K562 (cell line): ENCODE measurements at regions of chr3 and their contacts with region 1.

Region 1: DNA sequence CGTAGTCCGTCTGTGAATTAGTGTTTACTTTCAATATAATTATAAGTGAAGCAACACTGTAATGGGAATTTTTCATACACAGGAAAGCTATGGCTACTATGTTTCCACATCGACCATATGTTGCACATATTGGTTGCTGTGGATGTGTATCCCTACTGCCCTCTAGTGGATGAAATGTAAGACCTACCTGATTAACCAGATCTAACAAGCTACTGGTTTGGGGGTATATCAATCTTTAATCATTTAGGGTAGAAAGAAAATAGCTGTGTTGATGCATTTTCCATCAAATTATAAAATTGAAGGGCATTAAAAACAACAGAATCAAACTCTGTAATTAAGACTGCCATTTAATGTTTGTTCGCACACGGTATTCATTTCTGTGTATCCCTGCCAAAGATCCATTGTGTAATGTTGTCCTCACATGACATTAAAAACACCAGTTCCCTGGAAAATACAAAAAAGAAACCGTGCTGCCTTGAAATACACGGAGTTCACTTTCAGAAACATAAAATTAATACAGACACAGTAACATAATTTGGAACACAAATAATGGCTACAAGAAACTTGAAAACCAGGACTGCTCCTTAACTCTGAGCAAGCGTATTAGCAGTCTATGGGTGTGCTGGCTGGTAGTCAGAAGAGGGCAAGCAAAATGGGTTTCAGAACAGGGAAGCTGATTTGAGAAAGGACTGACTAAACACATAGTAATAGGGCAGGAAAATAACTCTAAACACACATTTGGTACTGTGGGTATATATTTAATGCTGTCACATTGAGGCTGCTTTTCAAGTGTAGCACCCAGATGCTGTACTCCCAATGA is 125.1 kb downstream of the TIGIT start:
- DNase-seq: peak; percentile 20 to 43 (median 36)
- ATAC-seq: peak; percentile 83
- H3K4me3 ChIP-seq: no peak overlapping the region
- H3K27ac ChIP-seq: no peak overlapping the region
- H3K4me1 ChIP-seq: no peaks in the 10 kb centered on the region
- H3K27me3 ChIP-seq: no peaks in the 10 kb centered on the region
- CTCF ChIP-seq: peak; percentile 34 to 65 (median 56)
- EP300 ChIP-seq: no peak
- POLR2A ChIP-seq: no peak
- RAD21 ChIP-seq: peak in 1 of 2 experiments; percentile 53; a peak in 3 of 4 replicates

Region 2: DNA sequence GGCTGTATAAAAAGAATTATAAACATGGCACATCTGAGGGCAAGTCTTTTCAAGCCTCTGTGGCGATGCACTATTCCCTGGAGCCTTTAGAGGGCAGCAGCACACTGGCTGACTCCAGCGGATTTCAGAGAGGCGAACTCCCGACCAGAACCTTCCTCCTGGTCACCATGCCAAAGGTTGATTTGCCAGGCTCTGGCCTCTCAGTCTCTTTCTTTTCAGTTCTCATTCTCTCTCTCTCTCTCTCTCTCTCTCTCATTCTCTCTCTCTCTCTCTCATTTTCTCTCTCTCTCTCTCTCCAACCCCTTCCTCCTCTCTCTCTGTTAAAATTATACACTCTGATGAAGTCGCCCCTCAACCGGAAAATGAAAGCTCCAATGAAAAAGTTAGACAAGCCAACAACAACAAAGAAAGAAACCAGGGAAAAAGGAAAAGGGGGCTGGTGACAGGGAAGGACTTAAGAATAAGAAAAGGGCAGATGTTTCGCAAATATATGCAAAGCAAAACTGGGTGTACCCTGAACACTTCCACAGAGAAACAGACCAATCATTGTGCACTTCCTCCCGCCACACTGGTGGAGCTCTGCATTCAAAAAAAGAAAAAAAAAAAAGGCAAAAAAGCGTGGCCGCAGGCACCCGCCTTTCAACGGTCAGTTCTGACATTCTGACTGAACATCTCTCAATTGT is 34.9 kb before region 1 on chr3:
- CTCF ChIA-PET with region 1: no interaction called
- POLR2A ChIA-PET with region 1: no interaction called
- in situ Hi-C with region 1: no loop called
- intact Hi-C with region 1: loop called (anchors 2 kb)
- DNase-seq: peak; percentile 40 to 57 (median 44)
- ATAC-seq: peak; percentile 88
- H3K4me3 ChIP-seq: no peak overlapping the region
- H3K27ac ChIP-seq: no peak overlapping the region
- H3K4me1 ChIP-seq: no peaks in the 10 kb centered on the region
- H3K27me3 ChIP-seq: no peaks in the 10 kb centered on the region
- CTCF ChIP-seq: peak; percentile 58 to 76 (median 74)
- EP300 ChIP-seq: no peak
- POLR2A ChIP-seq: no peak
- RAD21 ChIP-seq: peak; percentile 36 to 66

Region 3: GRCh38 chr3:114478801-114479200 is 59.9 kb after region 1 on chr3:
- CTCF ChIA-PET with region 1: no interaction called
- POLR2A ChIA-PET with region 1: no interaction called
- in situ Hi-C with region 1: no loop called
- intact Hi-C with region 1: no loop called
- DNase-seq: no peak
- ATAC-seq: no peak
- H3K4me3 ChIP-seq: no peak overlapping the region
- H3K27ac ChIP-seq: no peak overlapping the region
- H3K4me1 ChIP-seq: no peaks in the 10 kb centered on the region
- H3K27me3 ChIP-seq: no peaks in the 10 kb centered on the region
- CTCF ChIP-seq: no peak
- EP300 ChIP-seq: no peak
- POLR2A ChIP-seq: no peak
- RAD21 ChIP-seq: no peak